GM12878 (cell line): ENCODE measurements at regions of chr17 and their contacts with region 1.

Region 1: GRCh38 chr17:77214743-77215142 is 74.0 kb downstream of the SEC14L1 start:
- DNase-seq: no peak
- ATAC-seq: no peak
- H3K4me3 ChIP-seq: no peak overlapping the region
- H3K27ac ChIP-seq: no peak overlapping the region
- H3K4me1 ChIP-seq: peaks cover 36% of the 10 kb centered on the region
- H3K27me3 ChIP-seq: no peaks in the 10 kb centered on the region
- CTCF ChIP-seq: peak in 2 of 3 experiments; percentile 39 to 49; a peak in 5 of 6 replicates
- EP300 ChIP-seq: no peak
- POLR2A ChIP-seq: no peak
- RAD21 ChIP-seq: peak; percentile 17

Region 2: GRCh38 chr17:77109764-77110359 is 104.9 kb before region 1 on chr17:
- CTCF ChIA-PET with region 1: interaction called, 5 read pairs
- POLR2A ChIA-PET with region 1: interaction called, 4 read pairs
- RAD21 ChIA-PET with region 1: interaction called, 24 read pairs
- SMC1A ChIA-PET with region 1: interaction called, 6 read pairs
- in situ Hi-C with region 1: no loop called
- intact Hi-C with region 1: loop called (anchors 5 kb)
- DNase-seq: peak; percentile 60
- ATAC-seq: peak; percentile 45
- H3K4me3 ChIP-seq: no peak overlapping the region
- H3K27ac ChIP-seq: peak overlapping the region; percentile 2
- H3K4me1 ChIP-seq: peaks cover 41% of the 10 kb centered on the region
- H3K27me3 ChIP-seq: no peaks in the 10 kb centered on the region
- CTCF ChIP-seq: peak in 1 of 3 experiments; percentile 5; a peak in 1 of 6 replicates
- EP300 ChIP-seq: no peak
- POLR2A ChIP-seq: no peak
- RAD21 ChIP-seq: no peak

Region 3: GRCh38 chr17:77140166-77140878 is 74.4 kb before region 1 on chr17:
- CTCF ChIA-PET with region 1: interaction called, 8 read pairs
- POLR2A ChIA-PET with region 1: interaction called, 18 read pairs
- RAD21 ChIA-PET with region 1: interaction called, 29 read pairs
- SMC1A ChIA-PET with region 1: interaction called, 6 read pairs
- in situ Hi-C with region 1: no loop called
- intact Hi-C with region 1: loop called (anchors 2 kb)
- DNase-seq: peak; percentile 93
- ATAC-seq: peak; percentile 83
- H3K4me3 ChIP-seq: peak overlapping the region; percentile 34
- H3K27ac ChIP-seq: peak overlapping the region; percentile 84
- H3K4me1 ChIP-seq: peaks cover 17% of the 10 kb centered on the region
- H3K27me3 ChIP-seq: no peaks in the 10 kb centered on the region
- CTCF ChIP-seq: no peak
- EP300 ChIP-seq: peak; percentile 58 to 70; a peak in 2 of 4 replicates
- POLR2A ChIP-seq: peak; percentile 88
- RAD21 ChIP-seq: peak; percentile 12; the same call in 1 of the 2 replicates

Region 4: DNA sequence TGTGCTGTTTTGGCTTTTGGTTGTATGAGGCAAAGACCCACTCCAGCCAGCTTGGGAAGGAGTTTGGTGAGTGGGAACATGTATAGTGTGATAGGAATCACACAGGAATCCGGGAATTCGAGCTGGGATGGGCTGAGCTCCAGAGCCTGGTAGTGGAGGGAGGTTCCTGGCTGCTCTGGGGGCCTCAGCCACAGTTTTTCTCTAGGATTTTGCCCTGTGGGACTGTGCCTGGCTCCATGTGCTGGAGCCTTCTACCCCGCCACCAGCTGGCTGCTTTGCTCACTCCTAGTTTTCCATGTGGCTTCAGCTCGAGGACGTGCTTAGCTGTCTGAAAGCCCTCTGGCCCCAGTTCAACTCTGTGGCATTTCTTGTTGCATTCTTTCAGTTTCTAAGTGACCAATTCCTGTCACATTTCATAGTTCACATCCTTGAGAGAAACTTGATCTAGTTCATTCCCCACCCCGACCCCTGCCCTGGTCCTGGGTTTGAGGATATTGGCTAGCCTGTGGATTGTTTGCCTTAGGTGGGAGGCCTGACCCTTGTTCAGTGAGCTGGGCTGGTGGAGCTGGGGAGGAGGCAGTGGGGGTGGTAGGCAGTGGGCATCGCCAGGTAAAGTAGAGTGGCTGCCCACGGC is 69.0 kb before region 1 on chr17:
- CTCF ChIA-PET with region 1: interaction called, 8 read pairs
- POLR2A ChIA-PET with region 1: interaction called, 18 read pairs
- RAD21 ChIA-PET with region 1: interaction called, 29 read pairs
- SMC1A ChIA-PET with region 1: interaction called, 7 read pairs
- in situ Hi-C with region 1: no loop called
- intact Hi-C with region 1: loop called (anchors 2 kb)
- DNase-seq: peak; percentile 71
- ATAC-seq: peak; percentile 63
- H3K4me3 ChIP-seq: peak overlapping the region; percentile 69
- H3K27ac ChIP-seq: peak overlapping the region; percentile 97
- H3K4me1 ChIP-seq: peaks cover 43% of the 10 kb centered on the region
- H3K27me3 ChIP-seq: no peaks in the 10 kb centered on the region
- CTCF ChIP-seq: peak in 2 of 3 experiments; percentile 8 to 22; a peak in 1 of 6 replicates
- EP300 ChIP-seq: peak in 1 of 2 experiments; percentile 56; a peak in 2 of 4 replicates
- POLR2A ChIP-seq: 0 out of 2 replicates have a peak, but pooled peaks have one; percentile 32
- RAD21 ChIP-seq: no peak

Region 5: DNA sequence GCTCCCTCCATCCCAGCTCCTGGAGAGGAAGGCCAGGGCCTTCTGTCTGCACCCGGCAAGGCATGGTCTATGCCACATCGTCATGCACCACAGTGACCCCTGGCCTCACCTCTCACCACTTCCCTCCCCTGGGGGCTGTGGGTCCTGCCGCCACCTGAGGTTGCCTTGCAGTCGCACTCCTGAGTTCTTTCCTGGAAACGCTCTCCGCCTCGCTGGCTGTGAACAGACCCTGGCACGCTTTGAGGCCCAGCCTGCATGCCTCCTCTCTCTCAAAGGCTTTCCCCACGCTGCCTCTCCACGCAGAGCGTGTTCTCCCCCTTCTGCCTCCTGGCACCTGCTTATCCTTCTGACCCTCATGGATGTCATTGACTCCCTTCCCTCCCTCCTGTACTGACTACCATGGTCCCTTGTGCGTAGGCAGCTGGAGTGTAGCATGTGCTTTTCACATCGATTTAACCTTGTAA is 28.6 kb before region 1 on chr17:
- CTCF ChIA-PET with region 1: interaction called, 8 read pairs
- POLR2A ChIA-PET with region 1: interaction called, 10 read pairs
- RAD21 ChIA-PET with region 1: interaction called, 11 read pairs
- SMC1A ChIA-PET with region 1: interaction called, 19 read pairs
- in situ Hi-C with region 1: no loop called
- intact Hi-C with region 1: no loop called
- DNase-seq: no peak
- ATAC-seq: no peak; the same call in 1 of the 3 replicates
- H3K4me3 ChIP-seq: no peak overlapping the region
- H3K27ac ChIP-seq: peak overlapping the region; percentile 54
- H3K4me1 ChIP-seq: peaks cover 68% of the 10 kb centered on the region
- H3K27me3 ChIP-seq: no peaks in the 10 kb centered on the region
- CTCF ChIP-seq: no peak
- EP300 ChIP-seq: no peak
- POLR2A ChIP-seq: no peak
- RAD21 ChIP-seq: no peak

Region 6: DNA sequence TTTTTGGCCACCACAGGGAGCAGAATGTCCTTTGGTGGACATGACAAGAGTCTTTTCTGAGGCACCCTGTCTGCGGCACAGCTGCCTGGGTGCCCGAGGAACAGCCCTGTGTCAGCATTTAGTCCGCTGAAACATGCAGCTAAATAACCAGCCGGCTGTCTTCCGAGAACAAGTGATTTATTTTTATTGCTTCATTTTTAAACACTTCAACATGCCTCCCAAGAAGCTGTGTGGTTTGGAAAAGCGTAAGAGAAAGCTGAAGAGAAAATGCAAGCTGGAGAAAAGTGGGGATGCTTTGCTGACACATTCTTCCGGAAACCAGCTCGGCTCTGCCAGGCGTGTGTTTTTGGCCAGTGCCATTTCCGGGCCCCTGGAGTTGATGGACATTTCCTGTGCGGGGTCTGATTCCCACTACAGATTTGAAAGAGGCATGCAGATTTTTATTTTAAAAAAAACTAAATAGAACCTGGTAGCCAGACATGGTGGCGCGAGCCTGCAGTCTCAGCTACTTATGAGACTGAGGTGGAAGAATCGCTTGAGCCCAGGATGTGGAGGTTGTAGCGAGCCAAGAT is 20.7 kb after region 1 on chr17:
- CTCF ChIA-PET with region 1: interaction called, 9 read pairs
- POLR2A ChIA-PET with region 1: interaction called, 4 read pairs
- RAD21 ChIA-PET with region 1: interaction called, 8 read pairs
- SMC1A ChIA-PET with region 1: interaction called, 20 read pairs
- in situ Hi-C with region 1: no loop called
- intact Hi-C with region 1: no loop called
- DNase-seq: peak; percentile 34
- ATAC-seq: peak; percentile 62
- H3K4me3 ChIP-seq: no peak overlapping the region
- H3K27ac ChIP-seq: peak overlapping the region; percentile 74
- H3K4me1 ChIP-seq: peaks cover 25% of the 10 kb centered on the region
- H3K27me3 ChIP-seq: no peaks in the 10 kb centered on the region
- CTCF ChIP-seq: no peak
- EP300 ChIP-seq: no peak
- POLR2A ChIP-seq: no peak
- RAD21 ChIP-seq: no peak

Region 7: GRCh38 chr17:77247048-77247541 is 32.4 kb after region 1 on chr17:
- CTCF ChIA-PET with region 1: interaction called, 17 read pairs
- POLR2A ChIA-PET with region 1: no interaction called
- RAD21 ChIA-PET with region 1: interaction called, 4 read pairs
- SMC1A ChIA-PET with region 1: interaction called, 15 read pairs
- in situ Hi-C with region 1: no loop called
- intact Hi-C with region 1: no loop called
- DNase-seq: no peak
- ATAC-seq: peak; percentile 88
- H3K4me3 ChIP-seq: peak overlapping the region; percentile 73
- H3K27ac ChIP-seq: peak overlapping the region; percentile 44
- H3K4me1 ChIP-seq: peaks cover 27% of the 10 kb centered on the region
- H3K27me3 ChIP-seq: no peaks in the 10 kb centered on the region; a peak in 2 of 4 replicates
- CTCF ChIP-seq: peak; percentile 80 to 89 (median 80)
- EP300 ChIP-seq: no peak
- POLR2A ChIP-seq: no peak
- RAD21 ChIP-seq: peak; percentile 84

Region 8: DNA sequence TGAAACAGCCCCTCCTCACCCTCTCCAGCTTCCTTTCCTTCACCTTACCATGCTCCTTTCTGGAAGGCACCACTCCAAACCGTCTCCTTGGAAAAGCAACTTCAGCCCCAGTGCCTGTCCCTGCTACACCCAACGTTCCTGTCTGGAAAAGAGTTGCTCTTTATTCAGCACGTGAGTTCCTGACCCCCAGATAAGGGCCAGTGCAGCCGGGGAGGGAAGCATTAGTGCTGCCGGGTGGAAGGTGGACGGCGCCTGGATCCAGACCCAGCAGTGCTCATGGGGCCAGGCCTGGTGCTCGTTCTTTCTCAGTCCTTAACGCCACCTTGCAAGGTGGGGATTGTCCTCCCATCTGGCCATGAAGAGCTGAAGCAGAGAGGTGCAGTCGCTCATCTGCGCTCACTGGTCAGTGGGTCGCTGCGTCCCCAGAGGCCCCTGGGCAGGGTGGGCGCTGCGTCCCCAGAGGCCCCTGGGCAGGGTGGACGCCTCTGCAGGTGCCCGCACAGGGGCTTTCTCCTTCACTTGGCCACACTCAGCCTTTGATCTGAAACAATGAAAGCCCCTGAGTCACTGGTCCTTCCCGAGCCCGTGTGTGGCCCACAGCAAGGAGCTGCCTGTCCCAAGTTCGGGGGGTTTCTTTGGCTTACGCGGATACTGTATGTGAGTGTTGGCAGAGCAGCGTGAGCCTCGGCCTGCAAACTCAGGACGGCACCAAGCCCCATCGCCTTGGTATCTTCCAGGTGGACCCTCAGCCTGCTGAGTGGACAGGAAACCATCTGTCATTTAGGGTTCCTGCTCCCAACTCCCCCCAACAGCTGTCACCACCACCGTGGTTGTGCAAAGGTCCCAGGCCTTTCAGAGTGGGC is 43.1 kb after region 1 on chr17:
- CTCF ChIA-PET with region 1: no interaction called
- POLR2A ChIA-PET with region 1: no interaction called
- RAD21 ChIA-PET with region 1: no interaction called
- SMC1A ChIA-PET with region 1: no interaction called
- in situ Hi-C with region 1: no loop called
- intact Hi-C with region 1: no loop called
- DNase-seq: no peak
- ATAC-seq: no peak
- H3K4me3 ChIP-seq: no peak overlapping the region
- H3K27ac ChIP-seq: no peak overlapping the region
- H3K4me1 ChIP-seq: no peaks in the 10 kb centered on the region
- H3K27me3 ChIP-seq: no peaks in the 10 kb centered on the region; a peak in 1 of 4 replicates
- CTCF ChIP-seq: no peak
- EP300 ChIP-seq: no peak
- POLR2A ChIP-seq: no peak
- RAD21 ChIP-seq: no peak

Region 9: GRCh38 chr17:77312786-77313599 is 98.2 kb after region 1 on chr17:
- CTCF ChIA-PET with region 1: no interaction called
- POLR2A ChIA-PET with region 1: no interaction called
- RAD21 ChIA-PET with region 1: no interaction called
- SMC1A ChIA-PET with region 1: no interaction called
- in situ Hi-C with region 1: no loop called
- intact Hi-C with region 1: no loop called
- DNase-seq: no peak
- ATAC-seq: no peak
- H3K4me3 ChIP-seq: no peak overlapping the region
- H3K27ac ChIP-seq: no peak overlapping the region
- H3K4me1 ChIP-seq: peaks cover 6% of the 10 kb centered on the region; the same call in 1 of the 2 replicates
- H3K27me3 ChIP-seq: no peaks in the 10 kb centered on the region
- CTCF ChIP-seq: no peak
- EP300 ChIP-seq: no peak
- POLR2A ChIP-seq: no peak
- RAD21 ChIP-seq: no peak